ENCODE measurements at regions of chr5 and their contacts with region 1.

Region 1: GRCh38 chr5:54517174-54518092 is at the start of gene SNX18:
- DNase-seq: peak; percentile 95
- CTCF ChIP-seq: peak; percentile 94

Region 2: GRCh38 chr5:54835647-54836046 is 318.2 kb after region 1 on chr5:
- CTCF ChIA-PET with region 1: interaction called, 14 read pairs
- POLR2A ChIA-PET with region 1: no interaction called
- DNase-seq: no peak
- CTCF ChIP-seq: no peak

Region 3: GRCh38 chr5:54844905-54845566 is 327.6 kb after region 1 on chr5:
- CTCF ChIA-PET with region 1: interaction called, 88 read pairs
- POLR2A ChIA-PET with region 1: no interaction called
- DNase-seq: peak; percentile 16
- CTCF ChIP-seq: peak; percentile 53

Region 4: DNA sequence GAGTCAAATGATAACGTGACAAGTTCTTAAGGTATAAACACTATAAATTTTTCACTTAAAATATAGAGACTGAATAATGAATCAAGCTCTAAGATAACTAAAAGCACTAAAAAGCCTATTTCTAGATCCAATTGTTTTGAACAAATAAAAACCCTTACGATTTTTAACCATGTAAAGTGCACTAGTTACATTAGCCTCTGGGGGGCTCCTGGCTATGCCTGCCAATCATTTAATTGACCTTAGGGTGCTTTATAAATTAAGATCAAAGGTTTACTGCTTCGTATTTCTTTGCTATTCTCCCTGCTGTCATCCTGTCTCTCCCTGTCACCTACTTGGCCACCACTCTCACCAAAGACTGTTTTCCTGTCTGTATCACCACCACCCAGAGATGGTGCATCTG is 334.6 kb after region 1 on chr5:
- CTCF ChIA-PET with region 1: interaction called, 16 read pairs
- POLR2A ChIA-PET with region 1: no interaction called
- DNase-seq: no peak
- CTCF ChIP-seq: no peak

Region 5: DNA sequence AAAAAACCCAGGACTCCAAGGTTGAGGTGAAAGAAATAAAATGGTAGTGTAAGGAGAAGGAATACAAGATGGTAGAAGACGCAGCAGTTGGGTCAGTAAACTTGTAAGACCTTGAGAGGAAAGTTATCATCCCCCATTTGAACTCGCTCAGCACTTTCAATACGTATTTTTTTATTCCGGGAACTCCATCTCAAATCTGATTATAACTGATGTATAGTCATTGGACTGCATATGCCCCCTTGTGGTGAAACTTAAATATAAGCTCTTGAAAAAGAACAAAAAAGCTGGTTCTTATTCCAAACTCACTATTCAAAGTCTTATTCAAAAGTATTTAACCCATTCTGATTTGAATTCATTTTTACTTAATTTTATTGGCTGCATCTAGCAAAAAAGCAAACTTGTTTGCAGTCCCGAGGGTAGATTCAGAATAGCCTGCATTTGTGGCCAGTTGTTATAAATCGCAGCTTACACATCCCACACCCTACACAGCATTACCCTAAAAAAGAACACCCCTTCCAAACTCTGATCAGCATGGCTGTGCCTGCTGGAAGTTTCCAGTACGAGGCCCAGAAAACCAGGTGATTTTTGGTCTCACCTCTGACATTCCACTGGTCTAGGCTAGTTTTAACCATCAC is 350.0 kb after region 1 on chr5:
- CTCF ChIA-PET with region 1: interaction called, 61 read pairs
- POLR2A ChIA-PET with region 1: no interaction called
- DNase-seq: peak; percentile 38
- CTCF ChIP-seq: peak; percentile 36

Region 6: GRCh38 chr5:54873691-54874090 is 356.3 kb after region 1 on chr5:
- CTCF ChIA-PET with region 1: interaction called, 19 read pairs
- POLR2A ChIA-PET with region 1: no interaction called
- DNase-seq: no peak
- CTCF ChIP-seq: no peak

Measured in GM10248 (cell line).